ENCODE measurements at regions of chr12 and their contacts with region 1.

Region 1: DNA sequence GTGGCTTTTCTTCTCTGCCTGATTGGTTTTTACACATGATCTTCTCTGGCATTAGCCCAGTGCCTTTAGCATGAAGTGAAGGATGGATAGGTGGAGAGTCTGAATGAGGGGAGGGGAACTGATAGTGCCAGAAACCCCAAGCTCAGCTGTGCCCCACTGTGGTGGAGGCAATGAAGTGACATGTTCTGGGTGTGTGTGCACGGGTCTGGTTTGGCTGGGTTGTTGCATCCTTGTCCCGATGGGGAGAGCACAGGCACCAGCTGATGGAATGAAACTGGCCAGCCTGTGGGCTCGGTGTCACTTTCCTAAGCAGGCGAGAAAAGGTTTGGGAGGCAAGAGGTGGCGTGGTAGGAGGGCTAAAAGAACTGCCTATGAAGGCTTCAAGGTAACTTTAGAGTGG is 65.3 kb downstream of the CACNA1C start:
- DNase-seq: no peak
- ATAC-seq: no peak
- H3K4me3 ChIP-seq: no peak overlapping the region
- H3K27ac ChIP-seq: no peak overlapping the region
- H3K4me1 ChIP-seq: no peaks in the 10 kb centered on the region
- H3K27me3 ChIP-seq: peaks cover 0 to 37% of the 10 kb centered on the region in 2 experiments; a peak in 3 of 5 replicates
- CTCF ChIP-seq: no peak
- EP300 ChIP-seq: no peak
- POLR2A ChIP-seq: no peak
- RAD21 ChIP-seq: no peak

Region 2: DNA sequence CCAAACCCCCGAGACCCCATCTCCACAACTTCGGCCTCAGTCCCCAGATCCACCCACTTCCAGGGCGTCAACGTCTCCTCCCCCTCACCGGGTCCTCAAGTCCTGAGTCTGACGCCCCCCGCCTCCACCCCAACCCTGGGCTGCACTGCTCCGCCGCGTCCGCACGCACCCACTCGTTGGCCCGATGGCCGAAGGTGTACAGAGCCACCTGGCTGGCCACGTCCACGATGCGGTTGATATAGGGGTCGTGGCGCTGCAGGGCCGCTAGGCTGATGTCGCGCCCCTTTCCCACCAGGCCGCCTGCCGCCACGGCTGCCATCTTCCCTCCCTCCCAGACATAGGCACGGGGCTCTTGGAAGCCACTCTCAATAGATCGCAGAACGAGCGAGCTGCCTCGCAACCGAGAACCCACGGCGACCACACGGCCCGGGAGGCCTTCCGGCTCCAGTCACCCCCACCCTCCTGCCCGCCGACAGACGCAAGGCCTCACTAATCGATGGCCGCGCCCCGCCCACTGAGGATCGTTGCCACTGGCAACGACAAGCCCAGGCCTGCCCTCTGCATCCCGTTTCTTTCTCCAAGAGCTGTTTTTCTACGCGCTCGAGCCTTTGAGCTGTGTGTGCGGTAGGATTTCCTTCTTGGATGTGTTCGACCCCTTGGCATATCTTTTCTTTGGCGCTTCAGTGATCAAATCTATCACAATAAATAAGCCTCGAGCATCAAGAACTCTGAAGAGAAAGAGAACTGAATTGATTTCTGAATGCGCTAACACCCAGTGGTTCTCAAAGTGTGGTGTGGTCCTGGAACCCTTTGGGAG is 113.7 kb before region 1 on chr12 and contains the start of gene DCP1B:
- CTCF ChIA-PET with region 1: no interaction called
- POLR2A ChIA-PET with region 1: no interaction called
- in situ Hi-C with region 1: no loop called
- intact Hi-C with region 1: no loop called
- DNase-seq: peak; percentile 91
- ATAC-seq: peak; percentile 99
- H3K4me3 ChIP-seq: peak within 1 kb of the TSS; percentile 81 to 99 (median 93)
- H3K27ac ChIP-seq: peak within 1 kb of the TSS; percentile 90
- H3K4me1 ChIP-seq: peaks cover 49% of the 10 kb centered on the region
- H3K27me3 ChIP-seq: no peaks in the 10 kb centered on the region; a peak in 1 of 5 replicates
- CTCF ChIP-seq: peak; percentile 43
- EP300 ChIP-seq: 0 out of 4 replicates have a peak, but pooled peaks of 1 of the 2 experiments have one; percentile 18
- POLR2A ChIP-seq: peak; percentile 74 to 85
- RAD21 ChIP-seq: peak; percentile 32; the same call in 1 of the 2 replicates
- total RNA-seq, gene DCP1B: 11.4 and 12.4 TPM in 2 replicates

Region 3: GRCh38 chr12:2095864-2096263 is 22.2 kb before region 1 on chr12:
- CTCF ChIA-PET with region 1: no interaction called
- POLR2A ChIA-PET with region 1: no interaction called
- in situ Hi-C with region 1: no loop called
- intact Hi-C with region 1: loop called (anchors 1 kb)
- DNase-seq: no peak
- ATAC-seq: no peak
- H3K4me3 ChIP-seq: no peak overlapping the region
- H3K27ac ChIP-seq: no peak overlapping the region
- H3K4me1 ChIP-seq: no peaks in the 10 kb centered on the region
- H3K27me3 ChIP-seq: peaks cover 1 to 3% of the 10 kb centered on the region in 2 experiments; a peak in 2 of 5 replicates
- CTCF ChIP-seq: no peak
- EP300 ChIP-seq: no peak
- POLR2A ChIP-seq: no peak
- RAD21 ChIP-seq: no peak